HepG2 (cell line): ENCODE measurements at regions of chr10 and their contacts with region 1.

Region 1: DNA sequence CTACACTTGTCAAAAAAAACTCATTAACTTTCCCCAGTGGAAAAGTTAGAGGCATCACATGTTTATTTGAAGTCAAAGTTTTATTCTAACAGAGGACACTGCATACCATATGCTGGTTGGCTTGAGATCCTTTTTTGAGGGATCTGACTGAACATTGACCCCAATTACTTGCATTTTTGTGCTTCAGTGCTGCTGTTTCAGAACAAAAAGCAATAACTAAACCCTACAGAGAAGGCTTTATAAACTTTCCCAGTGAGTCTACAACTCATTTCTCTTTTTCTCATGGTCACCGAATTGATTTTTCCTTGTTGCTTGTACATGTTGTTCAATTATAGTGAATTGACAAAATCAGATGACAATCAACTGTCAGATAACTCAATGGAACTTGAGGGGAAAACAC is 69.3 kb upstream of the PHYHIPL start:
- DNase-seq: peak; percentile 78
- ATAC-seq: peak; percentile 87
- H3K4me3 ChIP-seq: no peak overlapping the region
- H3K27ac ChIP-seq: peak overlapping the region; percentile 69
- H3K4me1 ChIP-seq: peaks cover 55% of the 10 kb centered on the region
- H3K27me3 ChIP-seq: no peaks in the 10 kb centered on the region
- CTCF ChIP-seq: no peak
- EP300 ChIP-seq: 0 out of 4 replicates have a peak, but pooled peaks of 1 of the 2 experiments have one; percentile 15
- POLR2A ChIP-seq: no peak
- RAD21 ChIP-seq: no peak

Region 2: GRCh38 chr10:59173414-59173813 is 66.3 kb after region 1 on chr10:
- CTCF ChIA-PET with region 1: no interaction called
- POLR2A ChIA-PET with region 1: interaction called, 3 read pairs
- in situ Hi-C with region 1: no loop called
- intact Hi-C with region 1: loop called (anchors 5 kb)
- DNase-seq: no peak
- ATAC-seq: no peak
- H3K4me3 ChIP-seq: peak overlapping the region; percentile 53 to 89 (median 82); a peak in 5 of 6 replicates
- H3K27ac ChIP-seq: peak overlapping the region; percentile 95
- H3K4me1 ChIP-seq: peaks cover 15% of the 10 kb centered on the region
- H3K27me3 ChIP-seq: no peaks in the 10 kb centered on the region; a peak in 1 of 5 replicates
- CTCF ChIP-seq: no peak
- EP300 ChIP-seq: no peak
- POLR2A ChIP-seq: no peak
- RAD21 ChIP-seq: no peak